WTC11 (cell line): ENCODE measurements at regions of chr12 and their contacts with region 1.

Region 1: GRCh38 chr12:57583008-57583831 is 7.8 kb upstream of the PIP4K2C start:
- DNase-seq: peak; percentile 76
- ATAC-seq: peak; percentile 99
- H3K4me3 Mint-ChIP-seq: no peak overlapping the region
- H3K27ac Mint-ChIP-seq: no peak overlapping the region
- H3K4me1 Mint-ChIP-seq: no peaks in the 10 kb centered on the region; the same call in 1 of the 2 replicates
- H3K27me3 Mint-ChIP-seq: 0 out of 2 replicates have a peak, but pooled peaks cover 3% of the 10 kb centered on the region
- CTCF ChIP-seq: peak; percentile 92

Region 2: GRCh38 chr12:57419495-57419894 is 163.7 kb before region 1 on chr12:
- CTCF ChIA-PET with region 1: no interaction called
- POLR2A ChIA-PET with region 1: no interaction called
- DNase-seq: no peak
- ATAC-seq: no peak
- H3K4me3 Mint-ChIP-seq: no peak overlapping the region
- H3K27ac Mint-ChIP-seq: peak overlapping the region; percentile 24; the same call in 1 of the 2 replicates
- H3K4me1 Mint-ChIP-seq: peaks cover 12% of the 10 kb centered on the region
- H3K27me3 Mint-ChIP-seq: no peaks in the 10 kb centered on the region
- CTCF ChIP-seq: no peak

Region 3: GRCh38 chr12:57571926-57572762 is 11.1 kb before region 1 on chr12:
- CTCF ChIA-PET with region 1: interaction called, 18 read pairs
- POLR2A ChIA-PET with region 1: interaction called, 3 read pairs
- DNase-seq: no peak
- ATAC-seq: no peak
- H3K4me3 Mint-ChIP-seq: no peak overlapping the region
- H3K27ac Mint-ChIP-seq: no peak overlapping the region
- H3K4me1 Mint-ChIP-seq: no peaks in the 10 kb centered on the region
- H3K27me3 Mint-ChIP-seq: no peaks in the 10 kb centered on the region; the same call in 1 of the 2 replicates
- CTCF ChIP-seq: no peak

Region 4: DNA sequence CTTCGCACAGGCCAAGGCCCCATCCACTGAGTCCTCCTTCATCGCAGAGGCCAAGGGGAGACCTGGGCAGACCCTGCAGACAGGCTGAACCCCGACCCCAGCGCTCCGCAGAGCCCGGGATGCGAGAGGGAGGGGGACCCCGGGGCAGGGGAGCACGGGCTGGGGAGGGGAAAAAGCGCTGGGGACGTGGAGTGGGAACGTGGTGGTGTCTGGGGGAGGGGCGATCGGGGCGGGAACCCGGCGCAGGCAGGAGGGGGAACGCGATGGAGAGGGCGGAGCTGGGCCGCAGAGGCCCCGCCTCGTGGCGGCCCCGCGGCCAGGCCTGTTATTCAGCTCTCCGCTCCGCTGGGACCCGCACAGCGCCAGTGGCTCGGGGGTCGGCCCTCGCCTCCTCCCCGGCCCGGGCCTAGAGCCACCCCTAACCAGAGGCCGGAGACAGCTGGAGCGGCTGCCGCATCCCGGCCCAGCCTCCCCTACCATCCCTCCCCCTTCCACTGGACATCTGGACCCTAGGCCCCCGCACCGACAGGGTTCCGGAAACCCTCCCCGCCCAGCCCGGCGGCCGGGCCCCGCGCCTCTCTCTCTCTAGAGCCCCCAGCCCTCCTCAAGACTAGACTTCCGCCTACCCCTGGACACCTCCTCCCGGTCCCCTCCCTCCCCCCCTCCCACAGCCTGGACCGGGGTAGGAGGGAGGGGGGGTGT is 28.0 kb after region 1 on chr12 and contains the start of gene ARHGEF25:
- CTCF ChIA-PET with region 1: interaction called, 38 read pairs
- POLR2A ChIA-PET with region 1: no interaction called
- DNase-seq: peak; percentile 73
- ATAC-seq: peak; percentile 67
- H3K4me3 Mint-ChIP-seq: peak within 1 kb of the TSS; percentile 87
- H3K27ac Mint-ChIP-seq: no peak within 1 kb of the TSS
- H3K4me1 Mint-ChIP-seq: peaks cover 36% of the 10 kb centered on the region
- H3K27me3 Mint-ChIP-seq: peaks cover 53% of the 10 kb centered on the region
- CTCF ChIP-seq: no peak
- total RNA-seq, gene ARHGEF25: 11.9 to 19.0 TPM (median 17.2 TPM) in 3 replicates

Region 5: DNA sequence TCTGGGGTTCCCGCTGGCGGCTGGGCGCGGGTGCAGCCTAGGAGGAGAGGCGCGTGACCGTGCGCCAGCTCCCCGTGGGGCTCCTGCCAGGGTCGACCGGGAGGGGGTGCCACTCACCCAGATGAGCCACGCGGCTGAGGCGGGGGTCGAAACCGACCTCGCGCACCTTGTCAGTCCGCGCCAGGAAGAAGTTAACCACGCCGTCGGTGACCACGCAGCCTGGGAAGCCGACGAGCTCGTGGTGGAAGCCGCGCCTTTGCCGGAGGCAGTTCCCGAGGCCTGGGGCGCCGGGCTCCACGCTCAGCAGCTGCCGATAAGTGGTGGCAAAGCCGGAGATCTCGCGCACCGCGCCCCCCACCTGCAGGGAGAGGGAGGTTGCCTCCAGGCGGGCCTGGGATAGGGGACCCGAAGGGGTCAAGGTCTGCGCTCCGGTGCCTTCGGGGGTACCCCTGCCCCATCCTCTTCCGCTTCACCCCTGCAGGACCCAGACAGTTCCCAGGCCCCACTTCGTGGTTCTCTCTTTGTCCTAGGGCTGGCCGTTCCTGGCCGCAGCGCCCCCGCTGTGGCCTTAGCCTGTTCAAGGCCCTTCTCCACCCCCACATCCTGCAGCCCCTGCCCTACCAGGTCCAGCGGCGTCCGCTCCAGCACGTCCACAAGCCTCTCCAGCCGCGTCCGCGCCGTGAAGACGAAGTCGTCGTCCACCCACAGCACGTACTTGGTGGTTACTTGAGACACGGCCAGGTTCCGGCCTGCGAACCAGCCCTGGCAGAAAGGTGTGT is 44.5 kb after region 1 on chr12:
- CTCF ChIA-PET with region 1: interaction called, 29 read pairs
- POLR2A ChIA-PET with region 1: no interaction called
- DNase-seq: peak; percentile 53
- ATAC-seq: peak; percentile 8
- H3K4me3 Mint-ChIP-seq: peak overlapping the region; percentile 64
- H3K27ac Mint-ChIP-seq: no peak overlapping the region
- H3K4me1 Mint-ChIP-seq: peaks cover 21% of the 10 kb centered on the region
- H3K27me3 Mint-ChIP-seq: peaks cover 100% of the 10 kb centered on the region
- CTCF ChIP-seq: no peak

Region 6: GRCh38 chr12:57700317-57700716 is 117.1 kb after region 1 on chr12:
- CTCF ChIA-PET with region 1: interaction called, 3 read pairs
- POLR2A ChIA-PET with region 1: interaction called, 10 read pairs
- DNase-seq: no peak
- ATAC-seq: no peak
- H3K4me3 Mint-ChIP-seq: no peak overlapping the region
- H3K27ac Mint-ChIP-seq: no peak overlapping the region
- H3K4me1 Mint-ChIP-seq: no peaks in the 10 kb centered on the region
- H3K27me3 Mint-ChIP-seq: no peaks in the 10 kb centered on the region
- CTCF ChIP-seq: no peak

Region 7: GRCh38 chr12:57735952-57736740 is 152.9 kb after region 1 on chr12:
- CTCF ChIA-PET with region 1: interaction called, 44 read pairs
- POLR2A ChIA-PET with region 1: interaction called, 3 read pairs
- DNase-seq: peak; percentile 80
- ATAC-seq: peak; percentile 70
- H3K4me3 Mint-ChIP-seq: peak overlapping the region; percentile 75
- H3K27ac Mint-ChIP-seq: no peak overlapping the region
- H3K4me1 Mint-ChIP-seq: peaks cover 25% of the 10 kb centered on the region
- H3K27me3 Mint-ChIP-seq: peaks cover 95% of the 10 kb centered on the region
- CTCF ChIP-seq: no peak

Region 8: GRCh38 chr12:57759360-57759980 is 176.2 kb after region 1 on chr12:
- CTCF ChIA-PET with region 1: no interaction called
- POLR2A ChIA-PET with region 1: no interaction called
- DNase-seq: no peak
- ATAC-seq: peak; percentile 10; the same call in 1 of the 2 replicates
- H3K4me3 Mint-ChIP-seq: no peak overlapping the region
- H3K27ac Mint-ChIP-seq: no peak overlapping the region
- H3K4me1 Mint-ChIP-seq: peaks cover 25% of the 10 kb centered on the region
- H3K27me3 Mint-ChIP-seq: peaks cover 91% of the 10 kb centered on the region
- CTCF ChIP-seq: peak; percentile 34; the same call in 1 of the 2 replicates